ENCODE measurements at regions of chr10 and their contacts with region 1.

Region 1: DNA sequence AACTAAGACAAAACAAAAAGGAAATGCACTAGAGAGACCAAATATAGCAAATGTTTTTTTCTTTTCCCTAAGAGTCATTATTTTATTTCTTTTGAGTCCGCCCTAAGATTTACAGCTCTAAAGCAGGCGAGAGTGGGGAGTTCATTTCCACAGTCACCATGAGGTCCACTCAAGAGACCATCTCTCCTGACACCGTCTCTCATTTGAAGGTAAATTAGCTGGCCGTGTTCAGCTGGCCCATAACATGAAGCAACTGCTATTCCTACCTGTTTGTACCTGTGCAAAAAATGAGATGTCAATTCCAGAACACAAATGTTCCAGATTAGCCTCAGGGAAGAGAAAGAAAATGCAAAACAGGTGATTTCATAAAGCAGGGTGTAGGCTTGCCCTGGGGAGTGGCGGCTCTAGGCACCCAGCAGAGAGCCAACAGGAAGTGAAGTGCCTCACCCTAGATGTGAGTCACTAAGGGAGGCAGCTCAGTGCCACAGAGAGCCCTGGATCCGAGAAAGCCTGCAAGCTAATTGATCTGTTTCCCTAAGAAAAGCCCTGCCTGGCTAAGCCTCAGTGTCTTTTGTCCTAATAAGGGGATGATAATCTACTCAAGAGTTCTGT is 240.1 kb downstream of the ARHGAP21 start:
- DNase-seq: no peak
- CTCF ChIP-seq: no peak

Region 2: GRCh38 chr10:24503461-24504320 is 20.1 kb after region 1 on chr10:
- CTCF ChIA-PET with region 1: interaction called, 31 read pairs
- POLR2A ChIA-PET with region 1: no interaction called
- DNase-seq: peak; percentile 50
- CTCF ChIP-seq: peak; percentile 74

Measured in GM10248 (cell line).